AG04449 (cell line): ENCODE measurements at regions of chr3 and their contacts with region 1.

Region 1: DNA sequence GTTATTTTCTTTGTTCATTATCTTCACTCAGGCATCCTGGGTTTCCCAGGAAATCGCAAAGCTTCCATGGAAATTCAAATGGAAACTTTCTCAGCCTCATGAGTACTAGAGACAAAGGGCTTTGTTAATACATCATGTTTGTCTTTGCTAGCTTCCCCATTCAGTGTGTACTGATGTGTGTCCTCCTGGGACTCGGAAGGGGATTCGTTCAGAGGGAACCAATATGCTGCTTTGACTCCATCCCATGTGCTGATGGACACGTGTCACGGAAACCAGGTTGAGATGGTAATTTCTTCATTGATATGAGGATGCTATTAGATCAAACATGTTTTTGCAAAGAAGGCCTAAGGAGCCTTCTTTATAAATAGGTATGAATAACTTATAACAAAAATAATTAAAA is 87.0 kb upstream of the KCNAB1 start:
- DNase-seq: no peak
- H3K4me3 ChIP-seq: no peak overlapping the region
- CTCF ChIP-seq: no peak

Region 2: GRCh38 chr3:156044634-156044975 is 11.2 kb after region 1 on chr3:
- CTCF ChIA-PET with region 1: interaction called, 28 read pairs
- POLR2A ChIA-PET with region 1: no interaction called
- DNase-seq: no peak
- H3K4me3 ChIP-seq: no peak overlapping the region
- CTCF ChIP-seq: no peak